HEK293 (cell line): ENCODE measurements at regions of chr22 and their contacts with region 1.

Region 1: DNA sequence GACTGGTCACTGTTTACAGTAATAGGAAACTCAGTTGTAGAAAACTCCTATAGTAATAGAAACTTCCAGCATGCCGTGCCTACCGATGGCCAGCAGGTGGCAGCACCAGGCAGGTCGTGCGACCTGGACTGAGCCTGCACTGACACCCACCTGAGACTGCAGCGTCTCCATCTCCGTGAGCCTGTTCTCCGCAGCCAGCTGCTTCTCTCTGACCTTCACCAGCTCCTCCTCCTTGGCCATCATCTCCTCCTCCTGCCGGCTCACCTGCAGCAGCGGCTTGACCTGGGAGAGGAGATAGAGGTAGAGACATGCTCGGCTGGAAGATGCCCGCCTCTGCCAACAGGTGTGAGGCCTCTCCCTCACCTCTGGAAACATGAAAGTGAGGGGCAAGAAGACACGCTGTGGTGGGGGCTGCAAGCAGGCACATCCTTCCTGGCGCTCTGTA is 48.5 kb downstream of the APOL1 start:
- H3K4me3 ChIP-seq: no peak overlapping the region
- H3K27ac ChIP-seq: no peak overlapping the region
- H3K4me1 ChIP-seq: no peaks in the 10 kb centered on the region
- CTCF ChIP-seq: peak; percentile 81

Region 2: GRCh38 chr22:36286471-36287224 is 14.8 kb before region 1 on chr22:
- CTCF ChIA-PET with region 1: interaction called, 47 read pairs
- POLR2A ChIA-PET with region 1: interaction called, 4 read pairs
- H3K4me3 ChIP-seq: no peak overlapping the region
- H3K27ac ChIP-seq: no peak overlapping the region
- H3K4me1 ChIP-seq: no peaks in the 10 kb centered on the region
- CTCF ChIP-seq: peak; percentile 93

Region 3: GRCh38 chr22:36311386-36312358 is 10.3 kb after region 1 on chr22:
- CTCF ChIA-PET with region 1: interaction called, 38 read pairs
- POLR2A ChIA-PET with region 1: interaction called, 3 read pairs
- H3K4me3 ChIP-seq: no peak overlapping the region
- H3K27ac ChIP-seq: no peak overlapping the region
- H3K4me1 ChIP-seq: no peaks in the 10 kb centered on the region
- CTCF ChIP-seq: no peak

Region 4: GRCh38 chr22:36486619-36487384 is 185.4 kb after region 1 on chr22:
- CTCF ChIA-PET with region 1: interaction called, 45 read pairs
- POLR2A ChIA-PET with region 1: interaction called, 3 read pairs
- H3K4me3 ChIP-seq: no peak overlapping the region
- H3K27ac ChIP-seq: no peak overlapping the region
- H3K4me1 ChIP-seq: no peaks in the 10 kb centered on the region; the same call in 1 of the 2 replicates
- CTCF ChIP-seq: peak; percentile 79